T-cell (primary cell): ENCODE measurements at regions of chr19 and their contacts with region 1.

Region 1: DNA sequence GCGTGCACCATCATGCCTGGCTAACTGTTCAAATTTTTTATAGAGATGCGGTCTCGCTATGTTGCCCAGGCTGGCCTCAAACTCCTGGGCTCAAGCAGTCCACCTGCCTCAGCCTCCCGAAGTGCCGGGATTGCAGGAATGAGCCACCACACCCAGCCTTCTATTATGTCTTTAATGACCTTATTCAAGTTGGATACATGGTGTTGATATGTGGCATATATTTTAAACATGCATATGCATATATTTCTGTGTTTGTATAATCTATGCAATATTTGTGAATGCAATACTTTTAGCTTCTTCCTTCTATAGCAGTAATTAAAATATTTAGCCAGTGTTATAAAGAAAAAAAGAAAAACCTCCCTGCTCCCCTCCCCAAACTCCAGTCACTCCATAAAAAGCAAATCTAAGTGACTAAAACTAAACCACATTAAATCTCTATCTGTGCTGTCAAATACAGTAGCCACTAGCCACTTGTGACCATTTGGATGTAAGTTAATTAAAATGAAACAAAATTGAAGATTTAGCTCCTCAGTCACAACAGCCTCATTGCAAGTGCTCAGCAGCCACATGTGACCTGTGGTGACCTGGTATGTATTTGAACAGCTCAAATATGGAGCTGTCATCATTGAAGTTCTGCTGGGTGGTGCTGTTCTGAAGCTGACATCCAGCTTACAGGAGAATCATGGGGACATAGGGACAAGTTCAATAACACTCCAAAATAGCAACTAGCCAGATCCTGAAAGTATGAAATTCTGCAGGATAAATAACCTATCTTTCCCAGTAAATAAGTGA is 27.4 kb downstream of the FCGBP start:
- DNase-seq: no peak
- ATAC-seq: no peak
- H3K4me3 ChIP-seq: no peak overlapping the region
- H3K4me3 Mint-ChIP-seq: no peak overlapping the region
- H3K27ac ChIP-seq: no peak overlapping the region
- H3K27ac Mint-ChIP-seq: peak overlapping the region in 1 of 2 donors; percentile 41
- H3K4me1 ChIP-seq: peaks cover 0 to 2% of the 10 kb centered on the region in 2 experiments
- H3K4me1 Mint-ChIP-seq: peaks cover 12 to 21% (median 21%) of the 10 kb centered on the region in 3 donors
- H3K27me3 ChIP-seq: no peaks in the 10 kb centered on the region
- H3K27me3 Mint-ChIP-seq: no peaks in the 10 kb centered on the region

Region 2: GRCh38 chr19:39917561-39918182 is 10.7 kb after region 1 on chr19:
- CTCF ChIA-PET with region 1: no interaction called
- POLR2A ChIA-PET with region 1: no interaction called
- DNase-seq: no peak
- ATAC-seq: no peak
- H3K4me3 ChIP-seq: no peak overlapping the region
- H3K4me3 Mint-ChIP-seq: no peak overlapping the region
- H3K27ac ChIP-seq: no peak overlapping the region
- H3K27ac Mint-ChIP-seq: no peak overlapping the region
- H3K4me1 ChIP-seq: peaks cover 0 to 16% of the 10 kb centered on the region in 2 experiments
- H3K4me1 Mint-ChIP-seq: peaks cover 17 to 34% (median 18%) of the 10 kb centered on the region in 3 donors
- H3K27me3 ChIP-seq: no peaks in the 10 kb centered on the region
- H3K27me3 Mint-ChIP-seq: no peaks in the 10 kb centered on the region

Region 3: DNA sequence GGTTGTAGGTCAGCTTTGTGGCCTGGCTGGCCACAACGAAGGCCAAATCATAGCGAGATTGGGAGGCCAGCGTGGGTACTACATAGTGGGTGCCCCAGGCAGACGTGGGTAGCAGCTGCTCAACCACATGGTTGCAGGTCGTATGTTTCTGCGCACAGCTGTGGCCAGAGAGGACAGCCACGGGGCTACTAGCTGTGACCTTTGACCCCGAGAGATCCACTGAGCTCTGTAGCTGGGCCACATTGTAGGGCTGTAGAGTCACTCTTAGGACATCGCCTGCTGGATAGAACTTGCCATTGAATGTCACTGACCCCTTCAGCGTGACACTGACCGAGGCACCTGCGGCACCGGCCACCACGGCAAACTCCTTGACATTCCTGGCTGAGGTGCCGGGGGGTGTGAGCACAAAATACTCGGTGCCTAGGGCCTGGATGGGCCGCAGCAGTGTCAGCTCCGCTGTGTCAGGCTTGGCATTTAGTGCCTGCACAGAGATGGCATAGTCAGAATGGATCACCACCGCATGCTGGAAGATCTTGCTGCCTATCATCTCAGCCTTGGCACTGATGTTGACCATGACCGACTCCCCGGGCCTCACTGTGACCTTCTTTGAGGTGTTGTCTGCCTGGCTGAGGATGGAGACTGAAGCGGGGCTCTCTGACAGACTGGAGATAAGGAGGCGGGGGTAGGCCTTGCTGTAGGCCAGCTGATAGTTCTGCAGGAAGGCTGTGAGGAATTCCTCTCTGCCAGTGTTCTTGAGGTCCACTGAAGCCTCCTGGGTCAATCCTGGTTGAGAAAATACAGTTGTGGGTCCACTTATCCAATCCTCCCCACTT is 20.7 kb after region 1 on chr19:
- CTCF ChIA-PET with region 1: no interaction called
- POLR2A ChIA-PET with region 1: interaction called in 1 of 2 experiments, 17 read pairs
- DNase-seq: no peak
- ATAC-seq: no peak
- H3K4me3 ChIP-seq: no peak overlapping the region
- H3K4me3 Mint-ChIP-seq: no peak overlapping the region
- H3K27ac ChIP-seq: no peak overlapping the region
- H3K27ac Mint-ChIP-seq: peak overlapping the region in 1 of 2 donors; percentile 64
- H3K4me1 ChIP-seq: peaks cover 10 to 15% of the 10 kb centered on the region in 2 experiments
- H3K4me1 Mint-ChIP-seq: peaks cover 21 to 29% (median 28%) of the 10 kb centered on the region in 3 donors
- H3K27me3 ChIP-seq: peaks cover 0 to 5% of the 10 kb centered on the region in 2 experiments
- H3K27me3 Mint-ChIP-seq: no peaks in the 10 kb centered on the region